Sigmoid colon (tissue), 7 donors: ENCODE measurements at regions of chr6 and their contacts with region 1.

Region 1: GRCh38 chr6:136289579-136290409 is at the start of gene BCLAF1:
- DNase-seq: peak; percentile 100
- H3K4me3 ChIP-seq: peak within 1 kb of the TSS; percentile 78 to 99 (median 80)
- H3K27ac ChIP-seq: peak within 1 kb of the TSS; percentile 97 to 100 (median 98)
- H3K4me1 ChIP-seq: peaks cover 0 to 50% (median 46%) of the 10 kb centered on the region in 4 donors
- H3K27me3 ChIP-seq: no peaks in the 10 kb centered on the region
- CTCF ChIP-seq: no peak
- EP300 ChIP-seq: peak in 2 of 4 donors; percentile 23 to 90
- POLR2A ChIP-seq: peak; percentile 97 to 98
- total RNA-seq, gene BCLAF1: 78.0 to 139 (median 91.2) TPM

Region 2: GRCh38 chr6:135497412-135498269 is 792.2 kb before region 1 on chr6 and contains the start of gene AHI1:
- intact Hi-C with region 1: loop called (anchors 2 kb)
- DNase-seq: peak; percentile 97
- H3K4me3 ChIP-seq: peak within 1 kb of the TSS; percentile 76 to 93 (median 78)
- H3K27ac ChIP-seq: peak within 1 kb of the TSS; percentile 94 to 97 (median 96)
- H3K4me1 ChIP-seq: peaks cover 0 to 25% (median 13%) of the 10 kb centered on the region in 4 donors
- H3K27me3 ChIP-seq: no peaks in the 10 kb centered on the region
- CTCF ChIP-seq: peak in 1 of 4 experiments; percentile 29
- EP300 ChIP-seq: no peak
- POLR2A ChIP-seq: peak; percentile 75 to 85
- total RNA-seq, gene AHI1: 25.8 to 47.1 (median 31.6) TPM